GM12878 (cell line): ENCODE measurements at regions of chr1 and their contacts with region 1.

Region 1: DNA sequence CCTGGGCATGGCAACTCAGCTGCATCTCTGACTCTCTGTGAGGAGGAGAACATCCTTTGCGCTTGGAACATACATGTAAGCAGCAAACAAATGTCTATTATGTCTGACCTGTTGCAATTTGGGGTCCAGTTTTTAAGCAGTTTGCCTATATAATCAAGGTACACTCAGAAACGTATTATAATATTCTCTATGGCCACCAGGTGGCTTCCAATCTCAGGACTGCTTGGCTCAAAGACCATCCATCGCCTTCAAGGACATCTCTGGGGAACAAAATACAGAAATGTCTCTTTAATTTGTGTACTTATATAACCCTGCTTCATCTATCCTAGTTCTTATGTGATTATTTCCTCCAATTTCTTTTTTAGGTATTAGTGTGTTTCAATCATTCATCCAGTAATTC is 227.2 kb downstream of the OLFM3 start:
- DNase-seq: no peak
- ATAC-seq: peak; percentile 82
- H3K4me3 ChIP-seq: no peak overlapping the region
- H3K27ac ChIP-seq: no peak overlapping the region
- H3K4me1 ChIP-seq: no peaks in the 10 kb centered on the region
- H3K27me3 ChIP-seq: no peaks in the 10 kb centered on the region
- CTCF ChIP-seq: peak; percentile 36 to 50 (median 40); a peak in 5 of 6 replicates
- EP300 ChIP-seq: no peak
- POLR2A ChIP-seq: no peak
- RAD21 ChIP-seq: peak; percentile 42

Region 2: DNA sequence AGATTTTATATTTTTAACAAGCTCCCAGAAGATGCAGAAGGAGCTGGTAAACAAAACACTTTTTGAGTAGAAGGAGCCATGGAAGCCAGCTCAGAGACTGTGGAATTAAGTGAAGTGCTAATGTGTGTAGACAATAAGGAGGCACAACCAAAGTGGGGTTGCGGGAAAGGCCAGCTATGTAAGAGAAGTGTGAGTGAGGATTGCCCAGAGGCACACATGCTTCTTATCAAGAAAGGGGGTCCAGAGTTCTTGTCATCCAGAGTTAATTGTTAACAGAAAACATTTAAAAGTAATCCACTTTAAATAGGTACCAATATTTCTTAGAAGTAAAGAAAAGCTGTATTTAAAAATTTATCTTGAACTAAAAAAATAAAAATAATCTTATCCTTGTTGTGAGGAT is 90.4 kb after region 1 on chr1:
- CTCF ChIA-PET with region 1: no interaction called
- POLR2A ChIA-PET with region 1: no interaction called
- RAD21 ChIA-PET with region 1: no interaction called
- SMC1A ChIA-PET with region 1: no interaction called
- in situ Hi-C with region 1: no loop called
- intact Hi-C with region 1: no loop called
- DNase-seq: no peak
- ATAC-seq: no peak
- H3K4me3 ChIP-seq: no peak overlapping the region
- H3K27ac ChIP-seq: no peak overlapping the region
- H3K4me1 ChIP-seq: no peaks in the 10 kb centered on the region
- H3K27me3 ChIP-seq: no peaks in the 10 kb centered on the region
- CTCF ChIP-seq: no peak
- EP300 ChIP-seq: no peak
- POLR2A ChIP-seq: no peak
- RAD21 ChIP-seq: no peak

Region 3: DNA sequence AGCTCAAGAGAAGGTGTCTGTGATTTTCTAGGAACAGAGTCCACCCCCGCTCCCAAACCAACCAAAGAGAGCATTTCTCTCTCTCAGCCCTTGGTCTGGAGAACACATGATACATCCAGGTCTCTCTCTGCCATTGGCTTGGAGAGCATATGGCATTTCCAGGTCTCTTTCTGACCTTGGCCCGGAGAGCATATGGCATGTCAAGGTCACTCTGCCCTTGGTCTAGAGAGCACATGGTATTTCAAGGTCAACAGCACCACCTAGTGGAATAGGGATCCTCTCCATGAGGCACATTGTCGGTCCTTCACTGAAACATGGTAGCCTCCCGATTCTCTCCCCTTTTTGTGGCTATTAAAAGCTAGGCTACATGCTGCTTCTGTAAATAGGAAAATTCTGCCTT is 664.9 kb after region 1 on chr1:
- CTCF ChIA-PET with region 1: no interaction called
- POLR2A ChIA-PET with region 1: no interaction called
- RAD21 ChIA-PET with region 1: no interaction called
- SMC1A ChIA-PET with region 1: interaction called, 3 read pairs
- in situ Hi-C with region 1: no loop called
- intact Hi-C with region 1: loop called (anchors 2 kb)
- DNase-seq: no peak
- ATAC-seq: peak; percentile 86
- H3K4me3 ChIP-seq: no peak overlapping the region
- H3K27ac ChIP-seq: no peak overlapping the region
- H3K4me1 ChIP-seq: no peaks in the 10 kb centered on the region
- H3K27me3 ChIP-seq: no peaks in the 10 kb centered on the region
- CTCF ChIP-seq: peak; percentile 44 to 57 (median 53); a peak in 5 of 6 replicates
- EP300 ChIP-seq: no peak
- POLR2A ChIP-seq: no peak
- RAD21 ChIP-seq: peak; percentile 58